Adrenal gland (tissue), 19 donors: ENCODE measurements at regions of chr7 and their contacts with region 1.

Region 1: GRCh38 chr7:12314199-12314598 is 89.5 kb downstream of the VWDE start:
- DNase-seq: no peak
- H3K4me3 ChIP-seq: no peak overlapping the region
- H3K27ac ChIP-seq: no peak overlapping the region
- H3K4me1 ChIP-seq: no peaks in the 10 kb centered on the region
- H3K27me3 ChIP-seq: no peaks in the 10 kb centered on the region
- CTCF ChIP-seq: no peak
- POLR2A ChIP-seq: no peak

Region 2: GRCh38 chr7:11427686-11428273 is 886.4 kb before region 1 on chr7:
- intact Hi-C with region 1: loop called in 1 of 2 experiments (anchors 10 kb)
- DNase-seq: peak in 2 of 7 donors; percentile 16 to 39
- H3K4me3 ChIP-seq: no peak overlapping the region
- H3K27ac ChIP-seq: no peak overlapping the region
- H3K4me1 ChIP-seq: no peaks in the 10 kb centered on the region
- H3K27me3 ChIP-seq: no peaks in the 10 kb centered on the region
- CTCF ChIP-seq: peak; percentile 55 to 80 (median 79)
- POLR2A ChIP-seq: no peak